ENCODE measurements at regions of chr9 and their contacts with region 1.

Region 1: GRCh38 chr9:70111042-70111602 is 67.5 kb downstream of the MAMDC2 start:
- DNase-seq: peak; percentile 41 to 65 (median 60)
- ATAC-seq: peak; percentile 85
- H3K4me3 ChIP-seq: no peak overlapping the region
- H3K27ac ChIP-seq: no peak overlapping the region
- H3K4me1 ChIP-seq: no peaks in the 10 kb centered on the region
- H3K27me3 ChIP-seq: no peaks in the 10 kb centered on the region
- CTCF ChIP-seq: peak; percentile 64 to 80 (median 70)
- EP300 ChIP-seq: no peak
- POLR2A ChIP-seq: no peak
- RAD21 ChIP-seq: peak; percentile 45 to 58

Region 2: DNA sequence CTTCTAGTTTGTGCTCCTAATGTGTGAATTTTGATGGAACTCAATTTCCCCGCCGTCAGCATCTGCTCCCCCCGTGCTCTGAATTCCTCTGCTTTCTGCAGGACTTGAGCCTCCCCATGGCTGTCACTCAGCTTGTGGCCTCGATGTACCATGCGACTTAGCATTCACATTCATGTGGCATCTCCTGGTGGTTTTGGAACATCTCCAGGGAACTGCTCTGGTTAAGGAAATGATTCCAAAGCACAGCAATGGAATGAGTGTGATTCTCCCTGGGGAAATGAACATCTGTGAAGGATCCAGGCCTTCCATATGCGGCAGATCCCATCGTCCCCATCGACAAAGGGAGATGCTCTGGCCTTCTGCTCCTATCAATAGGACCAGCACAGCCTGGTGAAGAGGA is 667.1 kb before region 1 on chr9:
- CTCF ChIA-PET with region 1: no interaction called
- POLR2A ChIA-PET with region 1: no interaction called
- in situ Hi-C with region 1: loop called (anchors 25 kb)
- intact Hi-C with region 1: no loop called
- DNase-seq: no peak
- ATAC-seq: no peak
- H3K4me3 ChIP-seq: no peak overlapping the region
- H3K27ac ChIP-seq: no peak overlapping the region
- H3K4me1 ChIP-seq: no peaks in the 10 kb centered on the region
- H3K27me3 ChIP-seq: peaks cover 0 to 9% of the 10 kb centered on the region in 2 experiments; a peak in 2 of 5 replicates
- CTCF ChIP-seq: no peak
- EP300 ChIP-seq: no peak
- POLR2A ChIP-seq: no peak
- RAD21 ChIP-seq: no peak

Region 3: DNA sequence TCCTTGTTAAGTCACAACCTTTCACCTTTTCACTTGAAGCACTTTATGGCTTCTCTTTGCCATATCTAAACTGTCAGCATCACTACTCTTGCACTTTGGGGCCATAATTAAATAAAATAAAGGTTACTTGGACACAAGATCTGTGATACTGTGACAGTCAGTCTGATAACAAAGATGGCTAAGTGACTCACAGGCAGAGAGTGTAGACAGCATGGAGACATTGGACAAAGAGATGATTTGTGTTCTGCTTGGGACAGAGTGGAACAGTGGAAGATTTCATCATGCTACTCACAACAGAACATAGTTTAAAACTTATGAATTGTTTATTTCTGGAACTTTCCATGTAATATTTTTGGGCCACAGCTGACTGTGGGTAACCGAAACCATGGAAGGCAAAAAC is 66.0 kb after region 1 on chr9:
- CTCF ChIA-PET with region 1: no interaction called
- POLR2A ChIA-PET with region 1: no interaction called
- in situ Hi-C with region 1: no loop called
- intact Hi-C with region 1: no loop called
- DNase-seq: no peak
- ATAC-seq: no peak
- H3K4me3 ChIP-seq: no peak overlapping the region
- H3K27ac ChIP-seq: no peak overlapping the region
- H3K4me1 ChIP-seq: no peaks in the 10 kb centered on the region
- H3K27me3 ChIP-seq: no peaks in the 10 kb centered on the region
- CTCF ChIP-seq: no peak
- EP300 ChIP-seq: no peak
- POLR2A ChIP-seq: no peak
- RAD21 ChIP-seq: no peak